Right ventricle myocardium superior (tissue), 1 donor: ENCODE measurements at regions of chr20 and their contacts with region 1.

Region 1: DNA sequence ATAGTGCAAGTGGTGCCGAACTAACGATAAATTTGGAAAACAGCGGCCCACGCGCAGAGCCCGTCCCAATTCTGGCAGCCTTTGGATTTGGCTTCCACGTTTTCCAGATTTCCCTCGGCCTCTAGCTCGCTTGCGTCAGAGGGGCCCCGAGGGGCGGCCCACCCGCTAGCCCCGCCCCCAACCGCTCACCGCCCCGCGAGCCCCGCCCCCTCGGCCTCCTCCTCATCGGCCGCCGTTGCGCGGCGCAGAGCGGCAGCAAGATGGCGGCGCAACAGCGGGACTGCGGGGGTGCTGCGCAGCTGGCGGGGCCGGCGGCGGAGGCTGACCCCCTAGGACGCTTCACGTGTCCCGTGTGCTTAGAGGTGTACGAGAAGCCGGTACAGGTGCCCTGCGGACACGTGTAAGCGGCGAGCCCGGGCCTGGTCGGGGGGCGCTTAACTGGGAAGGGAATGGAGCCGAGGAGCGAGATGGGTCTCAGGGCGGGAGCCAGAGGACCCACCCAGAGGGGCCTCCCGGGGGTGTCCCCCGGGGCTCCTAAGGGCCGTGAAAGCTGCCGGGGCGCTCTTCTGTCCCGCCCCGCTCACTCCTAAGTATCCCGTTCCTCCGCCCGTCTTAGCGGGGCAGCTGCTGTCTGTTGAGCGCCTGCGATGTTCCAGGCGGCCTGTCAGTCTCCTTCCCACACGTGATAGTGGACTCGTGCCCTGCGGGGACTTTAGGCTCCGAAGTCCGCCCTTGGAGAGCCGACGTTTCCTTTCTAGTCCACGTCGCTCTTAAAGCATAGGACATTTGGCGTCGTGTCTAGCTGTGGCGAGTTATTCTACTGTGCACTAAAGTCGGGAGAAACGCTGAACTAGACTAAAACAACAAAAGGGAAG is at the start of gene RNF114:
- DNase-seq: peak; percentile 95
- ATAC-seq: peak; percentile 96
- total RNA-seq, gene RNF114: 52.1 TPM

Region 2: DNA sequence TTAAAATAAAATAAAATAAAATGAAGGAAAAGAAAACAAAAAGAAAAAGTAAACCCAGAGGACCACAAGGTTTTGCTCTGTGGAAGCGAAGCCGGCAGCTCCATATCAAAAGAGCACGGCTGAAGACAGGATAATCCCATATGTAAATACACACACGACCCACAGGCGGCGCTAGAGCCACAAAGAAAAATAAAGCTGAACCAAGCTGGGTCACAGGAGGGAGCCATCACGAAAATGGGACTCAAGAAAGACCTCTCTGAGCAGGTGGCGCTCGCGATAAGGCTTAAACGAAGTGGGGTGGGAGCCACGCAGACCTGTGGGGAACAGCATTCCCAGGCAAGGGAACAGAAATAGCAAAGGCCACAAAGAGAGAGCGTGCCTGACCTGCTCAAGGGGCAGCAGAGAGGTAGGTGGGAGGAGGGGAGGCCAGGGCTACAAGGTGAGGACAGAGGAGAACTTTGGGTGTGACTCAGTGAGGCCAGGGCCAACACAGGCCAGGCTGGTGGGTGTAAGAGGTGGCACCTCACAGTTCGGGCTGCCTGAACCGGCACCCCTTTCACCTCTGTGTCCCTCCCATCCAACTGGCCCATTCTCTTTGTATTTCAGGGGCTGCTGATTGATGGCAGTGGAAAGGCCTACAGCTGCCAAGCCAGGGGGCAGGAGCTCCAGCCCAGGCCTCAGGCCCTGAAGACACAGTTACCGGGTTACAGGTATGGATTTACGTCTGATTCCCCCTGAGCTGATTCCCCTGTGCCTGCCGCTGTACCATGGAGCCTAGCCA is 394.5 kb before region 1 on chr20:
- intact Hi-C with region 1: loop called (anchors 10 kb)
- DNase-seq: peak; percentile 76
- ATAC-seq: peak; percentile 82

Region 3: DNA sequence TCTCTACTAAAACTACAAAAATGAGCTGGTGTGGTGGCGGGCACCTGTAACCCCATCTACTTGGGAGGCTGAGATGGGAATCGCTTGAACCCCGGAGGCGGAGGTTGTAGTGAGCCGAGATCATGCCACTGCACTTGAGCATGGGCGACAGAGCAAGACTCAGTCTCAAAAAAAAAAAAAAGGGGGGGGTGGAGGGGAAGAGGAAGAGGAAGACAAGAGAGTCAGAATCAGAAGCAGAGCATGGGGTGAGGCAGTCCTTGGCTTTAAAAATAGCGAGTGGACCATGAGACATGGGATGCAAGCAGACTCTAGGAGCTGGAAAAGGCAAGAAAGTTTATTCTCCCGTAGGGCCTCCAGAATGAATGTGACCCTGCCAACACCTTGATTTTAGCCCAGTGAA is 127.6 kb before region 1 on chr20:
- intact Hi-C with region 1: no loop called
- DNase-seq: no peak
- ATAC-seq: no peak

Region 4: GRCh38 chr20:49982346-49983122 is 46.1 kb after region 1 on chr20 and contains the start of gene SNAI1:
- intact Hi-C with region 1: no loop called
- DNase-seq: peak; percentile 83
- ATAC-seq: peak; percentile 91
- total RNA-seq, gene SNAI1: 0.81 TPM